ENCODE measurements at regions of chr3 and their contacts with region 1.

Region 1: DNA sequence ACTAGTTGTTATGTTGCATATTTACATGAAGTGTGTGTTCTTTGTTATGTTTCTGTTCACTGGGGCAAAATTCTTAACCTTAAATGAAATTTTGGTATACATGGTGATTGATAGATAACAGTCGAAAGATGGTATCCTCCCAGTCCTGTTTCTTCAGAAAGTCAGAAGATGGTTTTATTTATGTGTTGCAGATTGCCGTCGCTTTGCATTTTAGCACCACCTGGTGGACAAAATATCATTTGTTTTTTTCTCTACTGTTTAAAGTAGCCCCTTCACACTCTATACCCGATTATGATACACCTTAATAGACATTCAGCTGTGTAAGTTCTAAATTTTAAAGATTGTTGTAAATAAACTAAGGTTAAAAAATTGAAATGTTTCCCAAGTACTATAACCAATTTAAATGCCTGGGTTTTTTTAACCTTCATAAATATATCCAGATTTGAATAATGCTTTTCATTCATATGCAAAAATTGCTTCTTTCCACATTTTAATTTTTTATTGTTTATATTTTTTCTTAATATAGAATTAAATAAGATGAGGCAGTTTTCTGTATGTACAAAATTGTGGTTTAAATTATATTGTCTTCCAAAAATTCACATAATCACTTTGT is 152.2 kb downstream of the ALCAM start:
- DNase-seq: peak in 1 of 2 experiments; percentile 53
- H3K4me3 ChIP-seq: no peak overlapping the region
- H3K4me3 Mint-ChIP-seq: no peak overlapping the region
- H3K27ac Mint-ChIP-seq: no peak overlapping the region
- H3K4me1 ChIP-seq: no peaks in the 10 kb centered on the region
- H3K4me1 Mint-ChIP-seq: no peaks in the 10 kb centered on the region
- H3K27me3 ChIP-seq: no peaks in the 10 kb centered on the region
- H3K27me3 Mint-ChIP-seq: no peaks in the 10 kb centered on the region
- CTCF ChIP-seq: peak; percentile 53 to 67

Region 2: DNA sequence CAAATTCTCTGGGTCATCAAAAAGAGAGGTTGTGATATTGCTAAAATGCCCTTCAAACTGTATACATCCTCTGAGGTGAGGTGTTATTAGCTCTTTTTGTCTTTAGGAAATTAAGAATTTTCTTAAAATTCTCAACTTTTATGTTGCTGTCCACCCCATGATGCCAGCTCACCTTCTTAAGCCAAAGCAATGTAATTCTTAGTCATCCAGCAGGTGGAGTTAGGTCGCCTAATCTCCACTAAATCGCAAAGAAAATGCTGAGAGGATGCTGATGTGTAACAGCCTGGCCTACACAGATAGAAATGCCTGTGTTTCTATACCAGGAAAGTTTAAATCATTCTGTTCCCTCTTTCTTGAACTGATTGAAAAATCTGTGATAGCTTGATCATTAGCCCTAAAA is 922.4 kb before region 1 on chr3:
- CTCF ChIA-PET with region 1: no interaction called
- POLR2A ChIA-PET with region 1: no interaction called
- intact Hi-C with region 1: loop called (anchors 1 kb)
- DNase-seq: peak in 1 of 2 experiments; percentile 25
- H3K4me3 ChIP-seq: no peak overlapping the region
- H3K4me3 Mint-ChIP-seq: no peak overlapping the region
- H3K27ac Mint-ChIP-seq: no peak overlapping the region
- H3K4me1 ChIP-seq: no peaks in the 10 kb centered on the region
- H3K4me1 Mint-ChIP-seq: no peaks in the 10 kb centered on the region
- H3K27me3 ChIP-seq: no peaks in the 10 kb centered on the region
- H3K27me3 Mint-ChIP-seq: no peaks in the 10 kb centered on the region
- CTCF ChIP-seq: peak; percentile 36 to 51

Region 3: DNA sequence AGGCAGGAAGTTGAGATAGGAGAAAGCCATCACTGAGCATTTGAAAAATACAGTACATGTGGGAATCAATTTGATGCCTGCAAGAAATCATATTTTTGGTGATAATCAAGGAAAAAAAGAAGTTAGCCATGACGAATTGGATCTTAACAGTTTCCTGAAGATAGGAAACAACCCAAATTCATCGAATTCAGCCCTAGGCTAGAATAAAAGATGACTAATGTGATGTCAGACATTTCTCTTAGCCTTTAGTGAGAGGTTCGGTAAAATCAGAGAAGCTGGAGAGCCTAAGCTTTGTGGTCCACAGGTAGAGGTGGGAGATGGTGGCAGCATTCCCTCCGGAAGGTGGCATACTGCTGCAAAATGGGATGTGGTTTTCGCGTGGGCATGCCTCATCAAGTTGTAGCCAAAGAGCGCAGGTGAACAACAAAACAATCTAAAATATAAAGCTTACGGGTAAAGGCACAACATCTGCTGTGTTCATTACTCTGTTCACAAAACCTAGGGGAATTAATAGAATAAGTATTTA is 296.3 kb before region 1 on chr3:
- CTCF ChIA-PET with region 1: no interaction called
- POLR2A ChIA-PET with region 1: no interaction called
- intact Hi-C with region 1: loop called (anchors 10 kb)
- DNase-seq: peak in 1 of 2 experiments; percentile 9
- H3K4me3 ChIP-seq: no peak overlapping the region
- H3K4me3 Mint-ChIP-seq: no peak overlapping the region
- H3K27ac Mint-ChIP-seq: no peak overlapping the region
- H3K4me1 ChIP-seq: no peaks in the 10 kb centered on the region
- H3K4me1 Mint-ChIP-seq: no peaks in the 10 kb centered on the region
- H3K27me3 ChIP-seq: no peaks in the 10 kb centered on the region
- H3K27me3 Mint-ChIP-seq: no peaks in the 10 kb centered on the region
- CTCF ChIP-seq: no peak

Measured in Caco-2 (cell line).